A549 (cell line): ENCODE measurements at regions of chr1 and their contacts with region 1.

Region 1: GRCh38 chr1:15803354-15803753 is 4.1 kb downstream of the UQCRHL start:
- DNase-seq: peak in 1 of 2 experiments; percentile 43
- ATAC-seq: no peak
- H3K4me3 ChIP-seq: no peak overlapping the region
- H3K27ac ChIP-seq: peak overlapping the region; percentile 92 to 99; a peak in 4 of 6 replicates
- H3K4me1 ChIP-seq: peaks cover 26% of the 10 kb centered on the region
- CTCF ChIP-seq: peak; percentile 28; the same call in 2 of the 3 replicates
- EP300 ChIP-seq: no peak
- POLR2A ChIP-seq: no peak
- RAD21 ChIP-seq: peak; percentile 21 to 46; a peak in 2 of 5 replicates

Region 2: GRCh38 chr1:15584489-15585363 is 218.6 kb before region 1 on chr1 and contains the start of gene AGMAT:
- CTCF ChIA-PET with region 1: no interaction called
- POLR2A ChIA-PET with region 1: interaction called, 11 read pairs
- DNase-seq: peak; percentile 68 to 76
- ATAC-seq: peak; percentile 90 to 96
- H3K4me3 ChIP-seq: peak within 1 kb of the TSS; percentile 46
- H3K27ac ChIP-seq: peak within 1 kb of the TSS; percentile 81 to 97
- H3K4me1 ChIP-seq: 0 out of 3 replicates have a peak, but pooled peaks cover 5% of the 10 kb centered on the region
- CTCF ChIP-seq: no peak
- EP300 ChIP-seq: no peak
- POLR2A ChIP-seq: no peak; the same call in 1 of the 2 replicates
- RAD21 ChIP-seq: no peak
- polyA plus RNA-seq, gene AGMAT: 10.3 and 10.7 TPM in 2 replicates

Region 3: DNA sequence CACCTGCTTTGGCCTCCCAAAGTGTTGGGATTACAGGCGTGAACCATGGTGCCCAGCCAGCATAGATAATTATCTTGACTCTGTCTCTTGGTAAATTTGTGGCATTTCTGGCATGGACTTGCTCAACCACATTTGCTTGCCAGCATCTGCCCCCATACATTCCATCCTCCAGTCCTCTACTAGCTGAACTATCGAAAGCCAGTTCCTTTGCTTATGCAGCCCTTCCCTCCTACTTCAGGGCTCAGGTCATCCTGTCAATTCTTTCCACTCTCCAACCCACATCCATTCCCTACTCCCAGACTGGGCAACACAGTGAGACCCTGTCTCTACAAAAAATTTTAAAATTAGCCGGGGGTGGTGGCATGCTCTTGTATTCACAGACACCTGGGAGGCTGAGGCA is 17.1 kb after region 1 on chr1:
- CTCF ChIA-PET with region 1: interaction called, 22 read pairs
- POLR2A ChIA-PET with region 1: interaction called, 11 read pairs
- DNase-seq: no peak
- ATAC-seq: peak in 1 of 2 experiments; percentile 38; a peak in 1 of 6 replicates
- H3K4me3 ChIP-seq: no peak overlapping the region
- H3K27ac ChIP-seq: no peak overlapping the region
- H3K4me1 ChIP-seq: no peaks in the 10 kb centered on the region
- CTCF ChIP-seq: no peak
- EP300 ChIP-seq: no peak
- POLR2A ChIP-seq: no peak
- RAD21 ChIP-seq: no peak

Region 4: DNA sequence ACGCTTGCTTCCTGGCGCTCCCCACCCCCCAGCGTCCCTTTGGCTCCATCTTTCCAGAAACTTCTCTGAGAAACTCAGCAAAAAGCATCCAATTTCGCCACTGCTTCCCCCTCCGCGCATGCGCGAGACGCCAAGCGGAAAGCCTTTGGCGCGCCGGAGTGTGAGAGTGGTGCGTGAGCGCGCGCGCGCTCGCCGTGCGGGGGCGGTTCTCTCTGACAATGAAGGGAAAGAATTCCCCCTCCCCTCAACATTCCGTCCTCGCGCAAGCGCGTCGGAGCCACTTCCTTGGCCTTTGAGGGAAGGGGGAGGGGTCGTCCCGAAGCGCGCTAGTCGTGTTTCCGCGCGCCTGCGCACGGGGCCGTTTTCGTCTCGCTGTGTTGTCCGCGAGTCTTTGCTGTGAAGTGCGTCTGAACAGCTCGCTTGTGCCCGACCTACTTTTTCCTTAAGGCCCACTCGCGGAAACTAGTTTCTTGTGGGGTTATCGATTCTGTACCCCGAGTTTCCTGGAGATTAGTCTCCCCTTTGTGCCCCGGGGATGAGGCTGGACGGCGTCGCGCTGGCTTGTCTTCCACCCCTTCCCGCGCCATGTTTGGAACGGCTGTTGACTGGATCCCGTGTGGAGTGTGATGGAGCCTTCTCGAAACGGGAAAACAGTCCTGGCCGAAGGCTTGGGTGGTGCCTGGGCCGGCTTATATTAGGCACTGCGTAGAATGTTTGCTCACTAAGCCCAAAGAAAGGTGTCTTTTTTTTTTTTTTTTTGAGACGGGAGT is 32.6 kb after region 1 on chr1:
- CTCF ChIA-PET with region 1: interaction called, 8 read pairs
- POLR2A ChIA-PET with region 1: interaction called, 98 read pairs
- DNase-seq: peak; percentile 74 to 98
- ATAC-seq: peak; percentile 67 to 75
- H3K4me3 ChIP-seq: peak overlapping the region; percentile 77
- H3K27ac ChIP-seq: peak overlapping the region; percentile 98 to 100
- H3K4me1 ChIP-seq: peaks cover 20% of the 10 kb centered on the region
- CTCF ChIP-seq: no peak
- EP300 ChIP-seq: no peak
- POLR2A ChIP-seq: peak; percentile 69
- RAD21 ChIP-seq: no peak

Region 5: DNA sequence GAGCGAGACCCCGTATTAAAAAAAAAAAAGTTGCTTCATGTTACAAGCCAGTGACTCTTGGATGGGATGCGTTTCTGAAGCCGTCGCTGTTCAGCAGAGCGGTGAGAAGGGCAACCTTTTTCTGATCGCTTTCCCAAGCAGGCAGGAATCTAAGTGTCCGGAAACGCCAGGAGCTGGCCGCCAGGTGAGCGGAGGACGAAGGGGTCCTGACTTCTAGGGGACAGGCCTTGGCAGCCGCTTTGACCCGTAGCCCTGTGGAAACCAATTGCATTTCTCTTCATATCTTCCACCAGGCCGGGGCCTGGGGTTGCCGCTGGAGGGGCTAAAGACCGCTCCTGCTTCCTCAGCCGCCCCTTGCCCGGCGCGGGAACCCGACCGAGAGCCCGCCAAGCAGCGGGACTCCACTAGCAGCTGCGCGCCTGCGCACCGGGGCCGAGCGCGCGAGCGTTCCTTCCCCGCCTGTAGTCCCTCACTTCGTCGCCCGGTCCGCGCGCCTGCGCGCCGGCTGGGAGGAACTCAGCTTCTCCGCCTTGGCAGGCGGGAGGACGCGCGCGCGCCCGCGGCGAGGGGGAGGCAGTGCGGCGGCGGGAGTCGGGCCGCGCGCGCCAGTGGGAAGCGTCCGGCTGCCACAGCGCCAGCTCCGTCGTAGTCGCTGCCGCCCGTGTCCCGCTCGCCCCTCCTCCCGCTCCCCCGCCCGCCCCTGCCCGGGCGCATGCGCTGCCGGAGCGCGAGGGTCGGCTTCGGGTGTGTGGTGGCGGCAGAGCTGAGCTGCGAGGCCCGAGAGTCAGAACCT is 43.9 kb after region 1 on chr1 and contains the start of gene SPEN:
- CTCF ChIA-PET with region 1: interaction called, 3 read pairs
- POLR2A ChIA-PET with region 1: interaction called, 30 read pairs
- DNase-seq: peak; percentile 68 to 94
- ATAC-seq: peak; percentile 80 to 87
- H3K4me3 ChIP-seq: peak within 1 kb of the TSS; percentile 99
- H3K27ac ChIP-seq: peak within 1 kb of the TSS; percentile 98 to 100
- H3K4me1 ChIP-seq: peaks cover 32% of the 10 kb centered on the region
- CTCF ChIP-seq: no peak
- EP300 ChIP-seq: no peak
- POLR2A ChIP-seq: peak; percentile 70
- RAD21 ChIP-seq: no peak; a peak in 1 of 5 replicates
- polyA plus RNA-seq, gene SPEN: 7.0 and 14.3 TPM in 2 replicates